CD8-positive, alpha-beta T cell (primary cell): ENCODE measurements at regions of chr14 and their contacts with region 1.

Region 1: GRCh38 chr14:51873221-51873893 is 12.9 kb downstream of the GNG2 start:
- DNase-seq: peak in 3 of 9 experiments; percentile 22 to 77 (median 66)
- ATAC-seq: peak; percentile 57
- H3K4me3 ChIP-seq: no peak overlapping the region
- H3K4me3 Mint-ChIP-seq: no peak overlapping the region
- H3K27ac ChIP-seq: peak overlapping the region in 1 of 2 experiments; percentile 49
- H3K27ac Mint-ChIP-seq: peak overlapping the region; percentile 58
- H3K4me1 ChIP-seq: peaks cover 66% of the 10 kb centered on the region
- H3K4me1 Mint-ChIP-seq: peaks cover 54% of the 10 kb centered on the region
- H3K27me3 ChIP-seq: no peaks in the 10 kb centered on the region
- H3K27me3 Mint-ChIP-seq: no peaks in the 10 kb centered on the region
- CTCF ChIP-seq: no peak

Region 2: DNA sequence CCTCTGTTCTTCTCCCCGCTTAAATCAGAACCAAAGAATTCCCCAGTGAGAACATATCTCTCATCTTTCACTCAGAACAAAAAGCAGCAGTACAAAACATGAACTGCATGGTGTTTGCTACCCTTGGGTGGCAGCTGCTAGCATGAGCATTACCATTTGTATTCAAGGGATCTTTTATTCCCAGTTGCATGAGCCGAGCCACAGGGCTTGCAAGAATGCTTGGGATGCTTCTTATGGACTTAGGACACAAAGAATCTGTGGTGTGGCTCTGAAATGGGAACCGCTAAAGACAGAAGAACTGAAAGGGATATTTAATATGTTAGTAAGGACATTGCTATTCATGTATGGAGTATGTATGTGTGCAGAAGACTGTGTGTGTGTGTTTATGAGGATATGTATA is 442.7 kb before region 1 on chr14:
- CTCF ChIA-PET with region 1: no interaction called
- POLR2A ChIA-PET with region 1: no interaction called
- intact Hi-C with region 1: no loop called
- DNase-seq: no peak
- ATAC-seq: no peak
- H3K4me3 ChIP-seq: no peak overlapping the region
- H3K4me3 Mint-ChIP-seq: no peak overlapping the region
- H3K27ac ChIP-seq: no peak overlapping the region
- H3K27ac Mint-ChIP-seq: no peak overlapping the region
- H3K4me1 ChIP-seq: no peaks in the 10 kb centered on the region
- H3K4me1 Mint-ChIP-seq: no peaks in the 10 kb centered on the region
- H3K27me3 ChIP-seq: peaks cover 0 to 3% of the 10 kb centered on the region in 2 experiments
- H3K27me3 Mint-ChIP-seq: peaks cover 35% of the 10 kb centered on the region
- CTCF ChIP-seq: no peak

Region 3: GRCh38 chr14:51889851-51890250 is 16.5 kb after region 1 on chr14:
- CTCF ChIA-PET with region 1: no interaction called
- POLR2A ChIA-PET with region 1: no interaction called
- intact Hi-C with region 1: loop called in 1 of 2 experiments (anchors 2 kb)
- DNase-seq: no peak
- ATAC-seq: peak; percentile 38
- H3K4me3 ChIP-seq: no peak overlapping the region
- H3K4me3 Mint-ChIP-seq: peak overlapping the region; percentile 7
- H3K27ac ChIP-seq: peak overlapping the region in 1 of 2 experiments; percentile 36
- H3K27ac Mint-ChIP-seq: peak overlapping the region; percentile 53
- H3K4me1 ChIP-seq: peaks cover 46% of the 10 kb centered on the region
- H3K4me1 Mint-ChIP-seq: peaks cover 82% of the 10 kb centered on the region
- H3K27me3 ChIP-seq: no peaks in the 10 kb centered on the region
- H3K27me3 Mint-ChIP-seq: no peaks in the 10 kb centered on the region
- CTCF ChIP-seq: no peak